Heart right ventricle (tissue), 16 donors: ENCODE measurements at regions of chr7 and their contacts with region 1.

Region 1: DNA sequence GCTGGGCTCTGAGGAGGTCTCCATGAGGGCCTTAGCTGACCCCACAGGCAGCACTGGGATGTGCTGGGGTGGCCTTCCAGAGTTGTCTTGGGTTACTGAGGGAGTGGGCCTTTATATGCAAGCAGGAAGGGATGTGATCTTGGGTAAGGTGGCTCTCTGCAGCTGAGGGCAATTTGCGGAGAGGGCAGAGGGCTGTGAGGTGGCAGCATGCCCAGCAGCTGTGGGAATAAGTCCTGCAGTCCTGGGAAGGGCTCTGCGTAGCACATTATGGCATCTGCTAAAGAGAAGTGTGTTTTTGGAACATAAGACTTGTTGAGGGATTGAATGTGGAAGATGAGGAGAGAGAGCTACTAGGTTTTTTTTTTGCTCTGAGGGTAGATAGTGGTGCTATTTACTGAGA is 99.6 kb upstream of the KMT2E start:
- DNase-seq: no peak
- ATAC-seq: no peak
- H3K4me3 ChIP-seq: no peak overlapping the region
- H3K27ac ChIP-seq: no peak overlapping the region
- H3K4me1 ChIP-seq: no peaks in the 10 kb centered on the region
- H3K27me3 ChIP-seq: no peaks in the 10 kb centered on the region
- CTCF ChIP-seq: no peak

Region 2: GRCh38 chr7:104231054-104232046 is 683.1 kb before region 1 on chr7:
- intact Hi-C with region 1: loop called in 6 of 10 experiments (anchors 5 to 10 kb)
- DNase-seq: peak in 1 of 2 donors; percentile 22
- ATAC-seq: peak in 6 of 8 donors; percentile 49 to 78 (median 58)
- H3K4me3 ChIP-seq: no peak overlapping the region
- H3K27ac ChIP-seq: no peak overlapping the region
- H3K4me1 ChIP-seq: peaks cover 0 to 6% (median 0%) of the 10 kb centered on the region in 9 donors
- H3K27me3 ChIP-seq: peaks cover 0 to 35% (median 17%) of the 10 kb centered on the region in 7 donors
- CTCF ChIP-seq: peak; percentile 56 to 84 (median 77)